Caco-2 (cell line): ENCODE measurements at regions of chr12 and their contacts with region 1.

Region 1: GRCh38 chr12:24012528-24012927 is 63.1 kb upstream of the SOX5 start:
- DNase-seq: peak in 1 of 2 experiments; percentile 47
- H3K4me3 ChIP-seq: no peak overlapping the region
- H3K4me3 Mint-ChIP-seq: no peak overlapping the region
- H3K27ac Mint-ChIP-seq: no peak overlapping the region
- H3K4me1 ChIP-seq: no peaks in the 10 kb centered on the region
- H3K4me1 Mint-ChIP-seq: no peaks in the 10 kb centered on the region
- H3K27me3 ChIP-seq: no peaks in the 10 kb centered on the region
- H3K27me3 Mint-ChIP-seq: no peaks in the 10 kb centered on the region
- CTCF ChIP-seq: peak; percentile 48 to 68

Region 2: GRCh38 chr12:24278832-24279231 is 266.3 kb after region 1 on chr12:
- CTCF ChIA-PET with region 1: no interaction called
- POLR2A ChIA-PET with region 1: no interaction called
- intact Hi-C with region 1: loop called (anchors 10 kb)
- DNase-seq: no peak
- H3K4me3 ChIP-seq: no peak overlapping the region
- H3K4me3 Mint-ChIP-seq: no peak overlapping the region
- H3K27ac Mint-ChIP-seq: no peak overlapping the region
- H3K4me1 ChIP-seq: no peaks in the 10 kb centered on the region
- H3K4me1 Mint-ChIP-seq: peaks cover 7% of the 10 kb centered on the region
- H3K27me3 ChIP-seq: no peaks in the 10 kb centered on the region
- H3K27me3 Mint-ChIP-seq: no peaks in the 10 kb centered on the region
- CTCF ChIP-seq: no peak

Region 3: DNA sequence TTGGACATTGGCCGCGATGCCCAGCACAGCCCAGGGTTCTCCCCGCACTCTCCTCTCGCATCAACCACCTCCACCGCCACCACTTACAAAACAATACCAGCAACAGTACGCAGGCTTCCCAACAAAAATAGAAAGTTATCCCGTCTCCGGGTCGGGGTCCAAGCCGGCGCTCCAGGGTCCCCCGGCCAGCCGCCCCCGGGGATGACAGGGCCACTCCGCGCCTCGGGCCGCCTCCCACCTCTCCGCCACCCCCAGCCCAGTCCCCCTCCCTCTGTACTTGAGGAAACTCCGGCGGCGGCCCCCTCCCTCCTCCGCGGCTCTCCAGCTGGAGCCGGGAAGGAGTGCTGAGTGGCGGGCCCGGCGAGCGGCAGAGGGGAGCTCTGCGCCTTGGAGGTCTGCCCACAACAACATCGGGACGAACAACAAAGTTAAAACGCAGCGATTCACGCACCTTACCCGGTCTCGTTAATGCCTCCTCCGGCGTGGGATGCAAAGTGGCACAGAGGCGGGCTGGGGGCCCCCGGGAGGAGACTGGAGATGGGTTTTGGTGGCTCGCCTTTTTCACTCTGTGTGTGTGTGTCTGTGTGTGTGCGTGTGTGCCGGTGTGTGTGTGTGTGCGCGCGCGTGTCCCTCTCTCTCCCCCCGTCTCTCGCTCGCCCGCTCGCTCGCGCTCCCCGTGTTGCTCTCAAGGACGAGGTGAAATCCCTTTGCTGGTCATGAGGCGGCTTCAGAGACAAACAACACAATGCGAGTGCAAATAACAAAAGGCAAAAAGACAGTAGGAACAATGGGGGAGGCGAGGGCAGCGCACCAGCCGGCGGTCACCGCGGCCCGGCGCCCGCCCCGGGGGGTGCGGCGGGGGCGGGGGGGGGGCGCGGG is 549.6 kb after region 1 on chr12:
- CTCF ChIA-PET with region 1: no interaction called
- POLR2A ChIA-PET with region 1: no interaction called
- intact Hi-C with region 1: loop called (anchors 10 kb)
- DNase-seq: peak; percentile 74 to 82
- H3K4me3 ChIP-seq: peak overlapping the region; percentile 84
- H3K4me3 Mint-ChIP-seq: peak overlapping the region; percentile 94
- H3K27ac Mint-ChIP-seq: peak overlapping the region; percentile 73
- H3K4me1 ChIP-seq: peaks cover 41% of the 10 kb centered on the region; the same call in 1 of the 2 replicates
- H3K4me1 Mint-ChIP-seq: peaks cover 30% of the 10 kb centered on the region
- H3K27me3 ChIP-seq: no peaks in the 10 kb centered on the region
- H3K27me3 Mint-ChIP-seq: no peaks in the 10 kb centered on the region
- CTCF ChIP-seq: no peak

Region 4: GRCh38 chr12:24630446-24630845 is 617.9 kb after region 1 on chr12:
- CTCF ChIA-PET with region 1: no interaction called
- POLR2A ChIA-PET with region 1: no interaction called
- intact Hi-C with region 1: loop called (anchors 2 kb)
- DNase-seq: peak in 1 of 2 experiments; percentile 49
- H3K4me3 ChIP-seq: no peak overlapping the region
- H3K4me3 Mint-ChIP-seq: no peak overlapping the region
- H3K27ac Mint-ChIP-seq: no peak overlapping the region
- H3K4me1 ChIP-seq: peaks cover 4% of the 10 kb centered on the region
- H3K4me1 Mint-ChIP-seq: peaks cover 26% of the 10 kb centered on the region
- H3K27me3 ChIP-seq: no peaks in the 10 kb centered on the region
- H3K27me3 Mint-ChIP-seq: no peaks in the 10 kb centered on the region
- CTCF ChIP-seq: peak; percentile 56

Region 5: GRCh38 chr12:24838531-24838950 is 826.0 kb after region 1 on chr12:
- CTCF ChIA-PET with region 1: no interaction called
- POLR2A ChIA-PET with region 1: no interaction called
- intact Hi-C with region 1: loop called (anchors 1 kb)
- DNase-seq: no peak
- H3K4me3 ChIP-seq: no peak overlapping the region
- H3K4me3 Mint-ChIP-seq: no peak overlapping the region
- H3K27ac Mint-ChIP-seq: no peak overlapping the region
- H3K4me1 ChIP-seq: no peaks in the 10 kb centered on the region
- H3K4me1 Mint-ChIP-seq: peaks cover 7% of the 10 kb centered on the region
- H3K27me3 ChIP-seq: no peaks in the 10 kb centered on the region
- H3K27me3 Mint-ChIP-seq: no peaks in the 10 kb centered on the region
- CTCF ChIP-seq: no peak